CD8-positive, alpha-beta T cell (primary cell): ENCODE measurements at regions of chr3 and their contacts with region 1.

Region 1: DNA sequence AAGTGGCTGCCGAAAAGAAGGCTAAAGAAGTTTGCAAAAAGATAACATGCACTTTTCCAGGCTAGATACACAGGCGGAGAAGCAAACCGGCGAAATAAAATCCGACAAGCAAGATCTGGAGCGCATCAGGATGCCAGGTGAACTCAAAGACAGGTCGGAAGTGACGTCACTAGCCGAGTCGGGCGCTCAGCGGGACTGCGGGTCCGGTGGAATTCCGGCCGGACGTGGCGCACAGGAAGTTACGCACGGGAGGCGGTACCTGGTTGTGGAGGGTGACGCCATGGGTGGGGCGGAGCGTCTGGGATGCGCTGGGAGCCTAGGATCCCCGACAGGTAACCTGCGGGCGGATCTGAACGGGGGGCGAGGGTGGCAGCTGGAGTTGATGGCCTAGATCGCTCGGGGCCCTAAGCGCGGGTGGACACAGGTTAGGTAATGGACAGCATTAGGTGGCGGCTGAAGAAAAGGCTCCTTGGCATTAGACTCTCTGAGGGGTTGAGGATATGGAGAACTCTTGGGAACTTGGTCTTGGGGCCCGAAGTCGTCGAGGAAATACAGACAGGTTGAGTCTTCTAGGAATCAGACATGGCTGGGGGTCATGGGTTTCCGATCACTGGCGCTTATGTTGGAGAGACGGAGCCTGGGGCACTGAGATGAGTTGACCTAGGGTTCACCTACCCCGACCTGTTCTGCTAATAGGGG is 29.0 kb upstream of the EHHADH start:
- DNase-seq: peak; percentile 86 to 98 (median 95)
- ATAC-seq: peak; percentile 98
- H3K4me3 ChIP-seq: peak overlapping the region; percentile 75 to 82
- H3K4me3 Mint-ChIP-seq: peak overlapping the region; percentile 86
- H3K27ac ChIP-seq: peak overlapping the region; percentile 58 to 78
- H3K27ac Mint-ChIP-seq: peak overlapping the region; percentile 88
- H3K4me1 ChIP-seq: peaks cover 14% of the 10 kb centered on the region
- H3K4me1 Mint-ChIP-seq: peaks cover 18% of the 10 kb centered on the region
- H3K27me3 ChIP-seq: no peaks in the 10 kb centered on the region
- H3K27me3 Mint-ChIP-seq: peaks cover 24% of the 10 kb centered on the region
- CTCF ChIP-seq: no peak

Region 2: DNA sequence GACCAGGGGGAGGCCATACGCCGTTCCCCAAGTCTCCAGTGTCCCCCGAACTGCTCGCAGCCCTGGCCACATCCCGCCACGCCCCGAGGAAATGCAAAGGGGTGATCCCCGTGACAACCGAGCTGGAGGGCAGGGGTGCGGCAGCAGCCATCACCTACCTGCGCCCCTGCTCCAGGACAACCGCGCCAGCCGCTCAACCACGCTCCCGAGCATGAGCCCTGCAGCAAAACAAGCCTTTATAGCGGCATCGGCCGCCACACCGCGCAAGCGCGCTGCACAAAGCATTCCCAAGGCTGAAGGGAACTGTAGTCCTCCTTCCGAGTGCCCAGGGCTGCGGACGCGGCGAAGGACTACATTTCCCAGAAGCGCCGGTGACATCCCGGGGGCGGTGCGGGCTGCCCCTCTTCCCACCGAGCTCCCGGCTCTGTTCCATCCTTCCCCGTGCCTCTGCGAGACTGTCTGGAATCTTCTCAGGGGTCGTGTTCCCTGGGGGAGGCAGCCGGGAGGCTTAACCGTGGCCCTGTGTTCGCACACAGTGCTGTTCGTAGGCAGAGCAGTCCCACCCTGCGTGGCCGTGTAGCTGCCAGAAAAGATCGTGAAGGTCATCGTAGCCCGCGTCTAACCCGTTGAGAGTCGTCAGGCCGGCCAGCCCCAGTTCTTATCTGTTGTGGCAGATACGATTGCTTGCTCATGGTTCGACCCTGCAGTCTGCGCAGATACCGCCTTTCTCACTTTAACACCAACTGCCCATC is 1265.0 kb before region 1 on chr3 and contains the start of gene ABCC5:
- CTCF ChIA-PET with region 1: no interaction called
- POLR2A ChIA-PET with region 1: no interaction called
- intact Hi-C with region 1: loop called in 1 of 2 experiments (anchors 5 kb)
- DNase-seq: peak; percentile 60 to 91 (median 80)
- ATAC-seq: peak; percentile 94
- H3K4me3 ChIP-seq: peak within 1 kb of the TSS; percentile 94 to 98
- H3K4me3 Mint-ChIP-seq: peak within 1 kb of the TSS; percentile 99
- H3K27ac ChIP-seq: peak within 1 kb of the TSS; percentile 51 to 56
- H3K27ac Mint-ChIP-seq: peak within 1 kb of the TSS; percentile 83
- H3K4me1 ChIP-seq: peaks cover 11% of the 10 kb centered on the region
- H3K4me1 Mint-ChIP-seq: peaks cover 32% of the 10 kb centered on the region
- H3K27me3 ChIP-seq: no peaks in the 10 kb centered on the region
- H3K27me3 Mint-ChIP-seq: peaks cover 12% of the 10 kb centered on the region
- CTCF ChIP-seq: peak; percentile 76
- total RNA-seq, gene ABCC5: 7.4 to 8.3 TPM

Region 3: GRCh38 chr3:185253645-185254410 is 29.0 kb before region 1 on chr3 and contains the start of gene EHHADH:
- CTCF ChIA-PET with region 1: no interaction called
- POLR2A ChIA-PET with region 1: no interaction called
- intact Hi-C with region 1: loop called in 1 of 2 experiments (anchors 1 kb)
- DNase-seq: peak; percentile 10 to 79 (median 56)
- ATAC-seq: peak; percentile 92
- H3K4me3 ChIP-seq: peak within 1 kb of the TSS; percentile 63 to 69
- H3K4me3 Mint-ChIP-seq: peak within 1 kb of the TSS; percentile 78
- H3K27ac ChIP-seq: peak within 1 kb of the TSS; percentile 53 to 66
- H3K27ac Mint-ChIP-seq: peak within 1 kb of the TSS; percentile 33
- H3K4me1 ChIP-seq: no peaks in the 10 kb centered on the region
- H3K4me1 Mint-ChIP-seq: peaks cover 4% of the 10 kb centered on the region
- H3K27me3 ChIP-seq: no peaks in the 10 kb centered on the region
- H3K27me3 Mint-ChIP-seq: peaks cover 11% of the 10 kb centered on the region
- CTCF ChIP-seq: no peak
- total RNA-seq, gene EHHADH: 0.28 to 0.73 TPM

Region 4: GRCh38 chr3:185498503-185499396 is 215.9 kb after region 1 on chr3 and contains the start of gene TMEM41A:
- CTCF ChIA-PET with region 1: no interaction called
- POLR2A ChIA-PET with region 1: no interaction called
- intact Hi-C with region 1: loop called (anchors 1 to 2 kb)
- DNase-seq: peak; percentile 77 to 94 (median 89)
- ATAC-seq: peak; percentile 98
- H3K4me3 ChIP-seq: peak within 1 kb of the TSS; percentile 89 to 98
- H3K4me3 Mint-ChIP-seq: peak within 1 kb of the TSS; percentile 95
- H3K27ac ChIP-seq: peak within 1 kb of the TSS; percentile 69 to 81
- H3K27ac Mint-ChIP-seq: peak within 1 kb of the TSS; percentile 91
- H3K4me1 ChIP-seq: peaks cover 20% of the 10 kb centered on the region
- H3K4me1 Mint-ChIP-seq: peaks cover 26% of the 10 kb centered on the region
- H3K27me3 ChIP-seq: no peaks in the 10 kb centered on the region
- H3K27me3 Mint-ChIP-seq: peaks cover 2% of the 10 kb centered on the region
- CTCF ChIP-seq: no peak
- total RNA-seq, gene TMEM41A: 28.2 to 30.3 TPM

Region 5: GRCh38 chr3:185585859-185586685 is 303.2 kb after region 1 on chr3 and contains the start of gene SENP2:
- CTCF ChIA-PET with region 1: no interaction called
- POLR2A ChIA-PET with region 1: no interaction called
- intact Hi-C with region 1: loop called in 1 of 2 experiments (anchors 5 kb)
- DNase-seq: peak; percentile 99 to 100 (median 100)
- ATAC-seq: peak; percentile 87
- H3K4me3 ChIP-seq: peak within 1 kb of the TSS; percentile 74 to 100
- H3K4me3 Mint-ChIP-seq: peak within 1 kb of the TSS; percentile 85
- H3K27ac ChIP-seq: peak within 1 kb of the TSS; percentile 92 to 99
- H3K27ac Mint-ChIP-seq: peak within 1 kb of the TSS; percentile 92
- H3K4me1 ChIP-seq: peaks cover 28% of the 10 kb centered on the region
- H3K4me1 Mint-ChIP-seq: peaks cover 36% of the 10 kb centered on the region
- H3K27me3 ChIP-seq: no peaks in the 10 kb centered on the region
- H3K27me3 Mint-ChIP-seq: no peaks in the 10 kb centered on the region
- CTCF ChIP-seq: no peak
- total RNA-seq, gene SENP2: 57.0 to 69.6 TPM

Region 6: DNA sequence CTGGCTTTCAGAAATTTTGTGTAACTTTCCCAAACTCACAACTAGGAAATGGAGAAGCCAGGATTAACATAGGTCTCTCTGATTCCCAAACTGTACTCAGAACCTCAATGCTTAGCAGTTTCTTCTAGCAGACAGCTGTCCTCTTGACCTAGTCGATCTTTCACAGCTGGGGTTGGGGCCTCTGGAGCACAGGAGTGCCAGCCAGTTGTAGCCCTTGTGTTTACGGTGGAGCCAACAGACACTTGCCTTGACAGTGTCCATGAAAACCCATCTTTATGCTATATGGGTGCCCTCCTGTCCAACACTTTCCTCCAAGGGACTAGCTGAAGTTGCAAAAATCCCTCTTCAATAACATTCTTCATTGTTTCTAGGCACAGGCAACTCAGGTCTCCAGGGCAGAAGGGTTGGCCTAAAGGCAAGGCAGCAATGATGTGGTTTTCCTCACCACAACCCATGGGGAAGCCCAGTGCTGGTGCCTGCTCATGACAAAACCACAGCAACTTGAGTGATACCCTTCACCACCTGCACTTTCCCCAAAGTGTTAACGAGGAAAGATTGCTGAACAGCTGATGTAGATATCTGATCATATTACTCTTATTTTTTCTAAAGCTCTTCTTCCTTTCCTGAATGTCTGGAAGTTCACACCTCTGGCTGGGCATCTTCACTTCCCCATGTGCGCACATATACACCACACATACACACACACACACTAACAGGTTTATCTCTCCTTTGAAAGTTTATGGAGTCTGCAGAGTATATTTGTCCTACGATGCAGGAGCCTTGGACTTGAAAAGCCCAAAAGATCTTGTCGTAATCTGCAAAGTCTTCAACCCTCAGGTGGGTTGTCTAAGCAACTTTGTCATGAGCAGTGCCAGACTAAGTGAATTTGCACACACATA is 1423.3 kb after region 1 on chr3:
- CTCF ChIA-PET with region 1: no interaction called
- POLR2A ChIA-PET with region 1: no interaction called
- intact Hi-C with region 1: no loop called
- DNase-seq: peak in 5 of 9 experiments; percentile 4 to 77 (median 66)
- ATAC-seq: peak; percentile 99
- H3K4me3 ChIP-seq: no peak overlapping the region
- H3K4me3 Mint-ChIP-seq: no peak overlapping the region
- H3K27ac ChIP-seq: no peak overlapping the region
- H3K27ac Mint-ChIP-seq: no peak overlapping the region
- H3K4me1 ChIP-seq: no peaks in the 10 kb centered on the region
- H3K4me1 Mint-ChIP-seq: peaks cover 11% of the 10 kb centered on the region
- H3K27me3 ChIP-seq: peaks cover 0 to 10% of the 10 kb centered on the region in 2 experiments
- H3K27me3 Mint-ChIP-seq: peaks cover 34% of the 10 kb centered on the region
- CTCF ChIP-seq: no peak